ENCODE measurements at regions of chr7 and their contacts with region 1.

Region 1: GRCh38 chr7:93231799-93232672 is at the start of gene VPS50:
- DNase-seq: peak; percentile 99

Region 2: GRCh38 chr7:92790992-92791391 is 441.0 kb before region 1 on chr7:
- in situ Hi-C with region 1: no loop called
- DNase-seq: peak; percentile 37

Region 3: GRCh38 chr7:93043385-93043985 is 188.6 kb before region 1 on chr7:
- in situ Hi-C with region 1: no loop called
- DNase-seq: no peak

Region 4: GRCh38 chr7:93461350-93461749 is 229.3 kb after region 1 on chr7:
- in situ Hi-C with region 1: no loop called
- DNase-seq: peak; percentile 45

Region 5: DNA sequence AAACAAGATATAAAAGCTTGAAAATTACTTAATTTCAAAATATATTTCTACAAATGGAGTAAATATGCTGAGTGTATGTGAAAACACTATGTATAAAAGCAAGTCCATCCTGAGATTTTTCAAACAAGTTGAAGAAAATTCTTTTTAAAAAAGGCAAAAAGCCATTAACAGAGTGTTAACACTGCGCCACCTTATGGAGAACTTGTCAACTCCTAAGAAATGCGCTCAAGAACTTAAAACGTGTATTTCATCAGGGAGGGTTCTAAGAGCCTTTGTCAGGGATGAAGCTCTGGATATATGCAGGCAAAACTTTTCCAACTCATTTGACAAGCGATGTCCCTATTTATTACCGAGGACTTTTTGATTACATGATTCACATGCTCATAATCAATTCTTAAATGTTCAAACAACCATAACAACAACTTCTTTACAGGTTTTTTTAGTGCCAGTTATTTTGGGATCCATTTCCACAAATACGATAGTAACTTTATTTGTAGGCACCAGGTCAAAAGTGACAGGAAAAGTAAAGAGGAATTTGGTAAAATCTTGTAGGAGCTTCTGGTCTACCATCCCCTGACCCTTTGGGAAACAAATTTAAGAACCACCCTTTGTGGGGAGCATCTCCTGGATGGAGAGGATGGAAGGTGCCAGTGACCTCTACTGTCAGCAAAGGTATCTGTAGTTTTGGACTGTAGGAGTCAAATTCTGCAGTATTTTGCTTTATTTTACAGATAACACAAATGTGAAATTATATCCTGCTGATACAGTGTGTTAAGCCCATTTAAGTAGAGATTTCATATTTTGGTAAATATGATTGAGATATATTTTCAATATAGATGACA is 319.2 kb after region 1 on chr7:
- in situ Hi-C with region 1: loop called (anchors 25 kb)
- DNase-seq: peak; percentile 78

Measured in ACHN (cell line).